ENCODE measurements at regions of chr7 and their contacts with region 1.

Region 1: GRCh38 chr7:101602484-101603241 is 26.4 kb downstream of the MYL10 start:
- DNase-seq: peak in 34 of 35 experiments; percentile 22 to 80 (median 57)
- ATAC-seq: peak; percentile 65 to 76 (median 67)
- H3K4me3 ChIP-seq: no peak overlapping the region
- H3K4me3 Mint-ChIP-seq: no peak overlapping the region
- H3K27ac ChIP-seq: no peak overlapping the region
- H3K27ac Mint-ChIP-seq: no peak overlapping the region
- H3K4me1 ChIP-seq: peaks cover 0 to 7% of the 10 kb centered on the region in 2 experiments
- H3K4me1 Mint-ChIP-seq: no peaks in the 10 kb centered on the region
- H3K27me3 ChIP-seq: peaks cover 0 to 12% of the 10 kb centered on the region in 2 experiments
- H3K27me3 Mint-ChIP-seq: peaks cover 0 to 3% of the 10 kb centered on the region in 2 donors

Region 2: DNA sequence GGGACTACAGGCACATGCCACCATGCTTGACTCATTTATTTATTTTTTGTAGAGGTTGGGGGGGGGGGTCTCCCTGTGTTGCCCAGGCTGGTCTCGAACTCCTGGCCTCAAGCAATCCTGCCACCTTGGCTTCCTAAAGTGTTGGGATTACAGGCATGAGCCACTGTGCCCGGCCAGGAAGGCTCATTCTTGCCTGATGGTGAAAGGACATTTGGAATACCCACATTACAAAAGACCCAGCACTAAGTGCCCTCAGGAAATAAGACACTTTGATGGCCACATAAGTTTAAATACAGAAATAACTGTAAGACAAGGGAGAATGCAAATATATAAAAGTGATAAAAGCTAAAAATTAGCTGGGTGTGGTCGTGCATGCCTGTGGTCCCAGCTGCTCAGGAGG is 483.8 kb before region 1 on chr7:
- CTCF ChIA-PET with region 1: interaction called in 1 of 2 experiments, 11 read pairs
- POLR2A ChIA-PET with region 1: no interaction called
- DNase-seq: no peak
- ATAC-seq: no peak
- H3K4me3 ChIP-seq: no peak overlapping the region
- H3K4me3 Mint-ChIP-seq: no peak overlapping the region
- H3K27ac ChIP-seq: no peak overlapping the region
- H3K27ac Mint-ChIP-seq: no peak overlapping the region
- H3K4me1 ChIP-seq: no peaks in the 10 kb centered on the region
- H3K4me1 Mint-ChIP-seq: peaks cover 6 to 9% (median 8%) of the 10 kb centered on the region in 3 donors
- H3K27me3 ChIP-seq: peaks cover 2 to 72% of the 10 kb centered on the region in 2 experiments
- H3K27me3 Mint-ChIP-seq: peaks cover 17 to 47% of the 10 kb centered on the region in 2 donors

Region 3: GRCh38 chr7:101564778-101565211 is 37.9 kb before region 1 on chr7:
- CTCF ChIA-PET with region 1: no interaction called
- POLR2A ChIA-PET with region 1: no interaction called
- DNase-seq: no peak
- ATAC-seq: no peak
- H3K4me3 ChIP-seq: no peak overlapping the region
- H3K4me3 Mint-ChIP-seq: no peak overlapping the region
- H3K27ac ChIP-seq: no peak overlapping the region
- H3K27ac Mint-ChIP-seq: no peak overlapping the region
- H3K4me1 ChIP-seq: no peaks in the 10 kb centered on the region
- H3K4me1 Mint-ChIP-seq: peaks cover 0 to 4% (median 2%) of the 10 kb centered on the region in 3 donors
- H3K27me3 ChIP-seq: peaks cover 0 to 28% of the 10 kb centered on the region in 2 experiments
- H3K27me3 Mint-ChIP-seq: peaks cover 8 to 26% of the 10 kb centered on the region in 2 donors

Region 4: GRCh38 chr7:102272075-102272917 is 669.6 kb after region 1 on chr7:
- CTCF ChIA-PET with region 1: interaction called, 3 to 20 read pairs
- POLR2A ChIA-PET with region 1: no interaction called
- DNase-seq: peak in 34 of 35 experiments; percentile 15 to 82 (median 66)
- ATAC-seq: peak; percentile 71 to 82 (median 78)
- H3K4me3 ChIP-seq: no peak overlapping the region
- H3K4me3 Mint-ChIP-seq: no peak overlapping the region
- H3K27ac ChIP-seq: no peak overlapping the region
- H3K27ac Mint-ChIP-seq: no peak overlapping the region
- H3K4me1 ChIP-seq: peaks cover 0 to 5% of the 10 kb centered on the region in 2 experiments
- H3K4me1 Mint-ChIP-seq: peaks cover 0 to 3% (median 0%) of the 10 kb centered on the region in 3 donors
- H3K27me3 ChIP-seq: peaks cover 0 to 3% of the 10 kb centered on the region in 2 experiments
- H3K27me3 Mint-ChIP-seq: no peaks in the 10 kb centered on the region